Activated T-helper 2 cell treated with anti-CD3 and anti-CD28 coated beads, Interferon-gamma antibody, Interleukin-2, Interleukin-4, amounts not matched to agents 10 μg/mL and 5 μg/mL and 100 μg/mL, durations not matched to agents 14 hours and 24 hours and 36 hours (primary cell): ENCODE measurements at regions of chr19 and their contacts with region 1.

Region 1: DNA sequence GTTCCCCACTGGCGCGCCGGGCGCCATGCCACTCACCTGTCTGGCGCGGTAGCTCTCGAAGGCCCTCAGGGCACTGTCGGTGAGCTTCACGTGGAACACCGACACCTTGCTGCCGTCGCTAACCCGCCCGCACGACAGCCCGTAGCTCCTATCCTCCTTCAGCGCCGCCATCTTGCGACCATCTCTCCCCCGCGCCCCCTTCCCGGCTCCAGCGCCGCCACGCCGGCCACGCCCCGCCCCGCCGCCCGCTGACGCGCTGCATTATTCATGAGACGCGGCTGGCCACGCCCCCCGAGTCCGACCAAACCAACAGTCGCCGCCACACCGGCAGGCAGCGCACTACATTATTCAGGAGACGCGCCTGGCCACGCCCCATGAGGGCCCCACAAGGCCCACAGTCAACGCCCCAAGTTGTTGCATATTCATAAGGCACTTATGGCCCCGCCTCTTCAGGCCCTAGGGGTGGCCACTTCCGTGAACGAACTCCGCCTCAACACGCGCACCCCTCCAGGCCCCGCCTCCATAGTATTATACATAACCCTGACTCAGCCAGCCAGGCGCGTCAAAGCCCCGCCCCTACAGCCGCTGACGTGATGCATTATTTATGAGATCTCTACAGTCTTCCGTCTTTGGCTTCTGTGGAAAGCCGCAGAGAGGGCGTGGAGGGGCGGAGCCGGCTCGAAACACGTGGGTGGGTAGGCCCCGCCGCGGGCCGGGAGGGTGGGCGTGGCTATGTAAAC is at the start of gene ELL:
- DNase-seq: peak; percentile 100
- H3K4me3 Mint-ChIP-seq: peak within 1 kb of the TSS; percentile 95
- H3K27ac Mint-ChIP-seq: peak within 1 kb of the TSS; percentile 88
- H3K4me1 Mint-ChIP-seq: peaks cover 9% of the 10 kb centered on the region
- H3K27me3 Mint-ChIP-seq: no peaks in the 10 kb centered on the region
- total RNA-seq, gene ELL: 27.0 and 27.5 TPM in 2 replicates

Region 2: GRCh38 chr19:18373892-18374629 is 148.0 kb before region 1 on chr19:
- intact Hi-C with region 1: no loop called
- DNase-seq: peak; percentile 60
- H3K4me3 Mint-ChIP-seq: peak overlapping the region; percentile 15
- H3K27ac Mint-ChIP-seq: peak overlapping the region; percentile 64
- H3K4me1 Mint-ChIP-seq: peaks cover 12% of the 10 kb centered on the region
- H3K27me3 Mint-ChIP-seq: no peaks in the 10 kb centered on the region

Region 3: GRCh38 chr19:18470787-18471186 is 51.3 kb before region 1 on chr19:
- intact Hi-C with region 1: loop called (anchors 2 kb)
- DNase-seq: no peak
- H3K4me3 Mint-ChIP-seq: no peak overlapping the region
- H3K27ac Mint-ChIP-seq: no peak overlapping the region
- H3K4me1 Mint-ChIP-seq: peaks cover 12% of the 10 kb centered on the region
- H3K27me3 Mint-ChIP-seq: no peaks in the 10 kb centered on the region

Region 4: DNA sequence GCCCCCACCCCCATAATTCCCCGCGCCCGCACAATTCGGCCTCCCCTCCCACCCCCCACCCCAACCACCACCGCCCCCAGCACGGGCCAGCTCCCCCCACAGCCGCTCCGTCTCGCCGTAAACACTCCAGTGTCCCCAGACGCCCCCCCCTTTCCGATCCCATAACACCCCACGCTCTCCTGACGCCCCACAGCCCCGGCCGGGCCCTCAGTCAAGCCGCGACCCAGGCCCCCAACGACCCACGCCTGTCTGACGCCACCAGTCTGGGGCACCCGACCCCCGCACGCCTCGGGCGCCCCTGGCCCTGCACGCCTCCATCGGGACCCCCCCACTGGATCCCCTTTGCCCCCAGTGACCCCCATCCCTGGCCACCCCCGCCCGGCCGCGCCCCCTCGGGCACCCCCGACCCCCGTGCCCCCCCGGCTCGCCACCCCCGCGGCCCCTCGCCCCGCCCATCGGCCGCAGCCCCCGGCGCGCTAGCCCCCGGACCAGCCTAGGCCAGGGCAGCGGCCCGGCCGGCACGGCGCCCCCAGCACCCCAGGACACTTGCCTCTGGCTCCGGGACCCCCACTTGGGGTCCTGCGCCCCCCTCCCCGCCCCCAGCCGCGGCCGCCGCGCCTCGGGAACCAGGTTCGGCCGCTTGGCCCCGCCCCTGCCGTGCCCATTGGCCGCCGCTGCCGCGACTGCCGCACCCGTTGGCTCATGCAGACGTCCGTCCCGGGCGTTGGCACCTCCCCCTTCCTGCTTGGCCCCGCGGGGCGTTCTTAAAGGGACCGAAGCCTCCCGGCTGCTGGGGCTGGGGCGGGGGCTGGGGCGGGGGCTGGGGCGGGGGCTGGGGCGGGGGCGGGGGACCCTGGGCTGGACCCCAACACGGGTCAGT is 21.1 kb after region 1 on chr19 and contains the start of gene FKBP8:
- intact Hi-C with region 1: loop called (anchors 1 kb)
- DNase-seq: peak; percentile 91
- H3K4me3 Mint-ChIP-seq: peak within 1 kb of the TSS; percentile 95
- H3K27ac Mint-ChIP-seq: peak within 1 kb of the TSS; percentile 99
- H3K4me1 Mint-ChIP-seq: peaks cover 14% of the 10 kb centered on the region
- H3K27me3 Mint-ChIP-seq: no peaks in the 10 kb centered on the region
- total RNA-seq, gene FKBP8: 196 and 201 TPM in 2 replicates

Region 5: DNA sequence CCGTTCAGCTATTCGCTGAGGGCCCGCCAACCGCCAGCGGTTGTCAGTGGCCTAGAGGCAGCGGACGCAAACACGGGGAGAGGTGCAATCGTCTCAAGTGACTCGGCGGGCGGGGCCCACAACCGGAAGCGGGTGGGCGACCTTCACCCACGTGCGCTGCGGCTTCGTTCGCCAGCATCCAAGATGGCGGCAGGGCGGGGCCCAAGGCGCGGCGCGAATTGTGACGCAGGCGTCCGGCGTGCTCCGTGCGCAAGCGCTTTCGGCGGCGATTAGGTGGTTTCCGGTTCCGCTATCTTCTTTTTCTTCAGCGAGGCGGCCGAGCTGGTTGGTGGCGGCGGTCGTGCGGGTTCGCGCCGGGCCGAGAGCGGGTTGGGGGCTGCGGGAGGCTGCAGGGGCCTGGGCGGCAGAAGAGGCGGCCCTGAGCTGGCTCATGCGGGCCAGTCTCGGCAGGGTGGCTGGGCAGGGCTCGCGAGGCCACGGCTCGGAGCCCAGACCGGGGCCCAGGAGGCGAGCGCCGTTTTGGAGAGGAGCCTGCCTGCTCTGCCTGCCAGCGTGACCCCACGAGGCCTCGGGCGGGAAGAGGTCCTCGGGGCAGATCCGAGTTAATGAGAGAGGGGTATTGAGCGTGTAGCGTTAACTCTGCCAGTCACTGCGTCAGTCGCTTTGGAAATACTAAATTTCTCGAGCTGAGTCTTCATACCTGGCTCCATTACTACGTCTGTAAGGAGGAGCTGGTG is 49.7 kb after region 1 on chr19 and contains the start of gene UBA52:
- intact Hi-C with region 1: loop called (anchors 1 kb)
- DNase-seq: peak; percentile 99
- H3K4me3 Mint-ChIP-seq: peak within 1 kb of the TSS; percentile 90
- H3K27ac Mint-ChIP-seq: peak within 1 kb of the TSS; percentile 91
- H3K4me1 Mint-ChIP-seq: peaks cover 13% of the 10 kb centered on the region
- H3K27me3 Mint-ChIP-seq: no peaks in the 10 kb centered on the region
- total RNA-seq, gene UBA52: 1,564 and 1,579 TPM in 2 replicates

Region 6: DNA sequence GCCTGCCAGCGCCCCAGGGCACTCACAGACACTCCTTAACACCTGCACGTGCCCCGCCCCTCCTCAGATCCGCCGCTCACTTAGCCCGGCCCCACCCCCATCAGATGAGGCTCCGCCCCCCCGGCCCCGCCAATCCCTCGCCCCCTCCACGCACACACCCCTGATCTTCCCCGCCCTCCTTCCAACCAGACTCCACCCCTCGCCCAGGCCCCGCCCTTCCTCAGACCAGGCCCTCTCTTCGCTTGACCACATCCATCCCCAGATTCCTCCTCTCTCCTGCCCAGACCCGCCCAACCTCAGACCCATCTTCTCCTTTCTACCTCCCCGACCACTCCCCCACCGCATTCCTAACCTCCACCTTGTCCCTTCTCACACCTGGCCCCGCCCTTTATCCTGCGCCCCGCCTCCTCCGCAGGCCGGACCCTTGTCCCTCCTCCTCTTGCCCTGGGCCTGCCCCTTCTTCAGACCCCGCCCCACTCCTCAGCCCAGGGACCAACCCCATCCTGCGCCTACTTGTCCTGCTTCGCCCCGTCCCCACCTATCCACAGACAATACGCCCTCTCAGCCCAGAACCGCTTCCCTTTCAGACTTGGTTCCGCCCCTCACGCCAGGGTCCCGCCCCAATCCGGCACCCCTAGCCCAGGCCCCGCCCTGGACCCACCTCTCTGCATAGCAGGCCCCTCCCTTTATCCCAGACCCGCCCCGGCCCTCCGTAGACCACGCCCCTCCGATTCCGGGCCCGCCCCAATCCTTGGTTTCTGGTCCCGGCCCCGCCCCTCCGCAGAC is 114.3 kb after region 1 on chr19:
- intact Hi-C with region 1: loop called (anchors 1 kb)
- DNase-seq: peak; percentile 97
- H3K4me3 Mint-ChIP-seq: peak overlapping the region; percentile 85
- H3K27ac Mint-ChIP-seq: peak overlapping the region; percentile 87
- H3K4me1 Mint-ChIP-seq: peaks cover 20% of the 10 kb centered on the region
- H3K27me3 Mint-ChIP-seq: peaks cover 5% of the 10 kb centered on the region